ENCODE measurements at regions of chr1 and their contacts with region 1.

Region 1: GRCh38 chr1:44985747-44986359 is 542 bp downstream of the EIF2B3 start:
- DNase-seq: no peak

Region 2: GRCh38 chr1:44842862-44843655 is 142.8 kb before region 1 on chr1 and contains the start of gene PTCH2:
- intact Hi-C with region 1: loop called (anchors 5 kb)
- DNase-seq: peak; percentile 80
- total RNA-seq, gene PTCH2: 0.35 TPM

Region 3: DNA sequence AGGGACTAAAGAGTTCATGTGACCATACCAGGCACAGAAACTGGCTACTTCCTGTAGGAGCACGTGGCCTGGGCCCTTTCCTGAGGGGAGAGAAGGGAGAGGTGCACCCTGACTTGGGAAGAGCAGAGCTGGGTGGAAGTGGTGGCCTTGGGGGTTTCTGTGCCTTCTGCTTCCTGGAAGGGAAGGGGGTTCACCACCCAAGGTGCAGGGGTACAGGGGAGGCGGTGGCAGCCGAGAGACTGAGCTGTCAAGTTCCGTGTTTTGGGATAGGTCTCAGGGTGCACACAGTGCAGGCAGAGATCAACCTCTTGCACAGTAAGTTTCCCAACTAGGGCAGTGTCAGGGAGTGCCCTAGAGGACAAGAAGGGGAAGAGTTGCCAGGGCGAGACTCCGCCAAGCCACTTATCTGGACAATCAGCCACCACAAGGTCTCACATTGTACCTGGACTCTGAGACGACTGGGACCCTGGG is 15.2 kb after region 1 on chr1:
- intact Hi-C with region 1: no loop called
- DNase-seq: no peak